BJ (cell line): ENCODE measurements at regions of chr1 and their contacts with region 1.

Region 1: DNA sequence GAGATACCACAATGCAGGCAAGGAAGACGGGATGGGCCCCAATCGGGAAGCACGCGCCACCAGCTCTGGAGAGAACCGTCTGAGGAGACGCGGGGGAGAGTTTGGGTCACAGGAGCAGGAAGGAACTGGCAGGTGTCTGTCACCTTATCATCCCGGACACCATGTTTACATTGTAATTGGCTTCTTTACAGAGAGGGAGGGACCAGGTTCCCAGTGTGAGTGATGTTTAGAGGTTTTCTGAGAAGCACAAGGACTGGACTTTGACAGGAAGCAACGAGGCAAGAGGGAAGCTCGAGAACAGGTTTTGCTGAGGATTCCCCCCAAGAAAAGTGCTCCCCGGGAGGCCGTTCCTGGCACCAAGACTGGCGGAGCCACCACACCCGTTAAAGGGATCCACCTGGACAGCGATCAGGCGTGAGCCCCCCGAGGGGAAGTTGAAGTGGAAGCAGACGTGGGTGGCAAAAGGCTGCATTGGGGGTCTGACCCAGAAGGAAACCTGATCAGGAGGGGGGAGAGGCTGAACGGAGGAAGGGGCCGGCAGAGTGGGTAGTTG is 957 bp downstream of the EPS15 start:
- DNase-seq: no peak
- H3K4me3 ChIP-seq: peak overlapping the region; percentile 93
- H3K27me3 ChIP-seq: no peaks in the 10 kb centered on the region
- CTCF ChIP-seq: no peak

Region 2: GRCh38 chr1:51088488-51088887 is 429.6 kb before region 1 on chr1:
- CTCF ChIA-PET with region 1: no interaction called
- POLR2A ChIA-PET with region 1: no interaction called
- DNase-seq: no peak
- H3K4me3 ChIP-seq: no peak overlapping the region
- H3K27me3 ChIP-seq: peaks cover 2% of the 10 kb centered on the region; the same call in 1 of the 2 replicates
- CTCF ChIP-seq: 0 out of 2 replicates have a peak, but pooled peaks have one; percentile 16

Region 3: GRCh38 chr1:51488372-51489050 is 29.6 kb before region 1 on chr1:
- CTCF ChIA-PET with region 1: no interaction called
- POLR2A ChIA-PET with region 1: interaction called, 14 read pairs
- DNase-seq: no peak
- H3K4me3 ChIP-seq: no peak overlapping the region
- H3K27me3 ChIP-seq: no peaks in the 10 kb centered on the region
- CTCF ChIP-seq: no peak

Region 4: DNA sequence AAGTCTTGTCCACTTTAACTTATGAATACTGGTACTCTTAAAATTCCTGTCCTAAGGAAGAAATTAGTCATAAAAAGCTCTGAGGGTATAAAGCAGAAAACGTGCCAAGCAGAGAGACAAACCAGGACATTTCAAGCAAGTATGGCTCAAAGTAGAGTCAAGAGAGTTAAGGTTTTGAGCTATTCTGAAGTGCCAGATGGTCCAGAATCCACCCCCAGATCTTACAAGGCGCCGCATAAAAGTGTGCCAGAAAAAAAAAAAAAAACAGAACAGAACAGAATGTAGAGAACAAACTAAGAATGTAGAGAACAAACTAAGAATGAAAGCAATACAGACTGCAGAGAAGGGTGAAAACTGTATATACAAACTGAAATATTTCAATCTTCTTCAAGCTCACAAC is 11.6 kb before region 1 on chr1:
- CTCF ChIA-PET with region 1: interaction called, 6 read pairs
- POLR2A ChIA-PET with region 1: interaction called, 16 read pairs
- DNase-seq: peak; percentile 63
- H3K4me3 ChIP-seq: no peak overlapping the region
- H3K27me3 ChIP-seq: no peaks in the 10 kb centered on the region
- CTCF ChIP-seq: no peak

Region 5: DNA sequence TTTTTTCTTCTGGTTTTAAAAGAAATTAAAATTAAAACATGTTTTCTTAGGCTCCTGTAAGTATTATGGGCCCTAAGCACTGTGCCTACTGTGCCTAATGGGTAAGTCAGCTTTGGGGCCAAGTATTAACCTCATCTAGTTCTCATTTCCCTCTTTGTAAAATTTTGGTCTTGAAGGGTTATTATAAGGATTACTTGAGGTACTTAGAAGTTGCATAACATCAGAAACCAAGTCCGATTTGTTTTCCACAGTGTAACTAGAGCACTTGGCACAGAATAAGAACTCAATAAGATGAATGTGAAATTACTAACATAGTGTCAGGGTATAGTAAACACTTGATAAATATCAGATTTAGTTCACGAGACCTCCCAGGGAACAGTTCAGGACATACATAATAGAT is 82.4 kb after region 1 on chr1:
- CTCF ChIA-PET with region 1: no interaction called
- POLR2A ChIA-PET with region 1: no interaction called
- DNase-seq: no peak
- H3K4me3 ChIP-seq: no peak overlapping the region
- H3K27me3 ChIP-seq: no peaks in the 10 kb centered on the region
- CTCF ChIP-seq: no peak